B cell (primary cell): ENCODE measurements at regions of chr19 and their contacts with region 1.

Region 1: GRCh38 chr19:12139885-12140547 is at the start of gene ZNF20:
- DNase-seq: peak; percentile 91
- ATAC-seq: peak; percentile 96
- H3K4me3 ChIP-seq: peak within 1 kb of the TSS; percentile 73 to 93 (median 83)
- H3K4me3 Mint-ChIP-seq: peak within 1 kb of the TSS; percentile 84
- H3K27ac ChIP-seq: peak within 1 kb of the TSS; percentile 31 to 62
- H3K27ac Mint-ChIP-seq: peak within 1 kb of the TSS; percentile 86
- H3K4me1 ChIP-seq: peaks cover 15 to 23% of the 10 kb centered on the region in 2 donors
- H3K4me1 Mint-ChIP-seq: peaks cover 34% of the 10 kb centered on the region
- H3K27me3 ChIP-seq: no peaks in the 10 kb centered on the region
- H3K27me3 Mint-ChIP-seq: no peaks in the 10 kb centered on the region
- CTCF ChIP-seq: no peak
- total RNA-seq, gene ZNF20: 5.4 and 10.6 TPM in 2 replicates

Region 2: DNA sequence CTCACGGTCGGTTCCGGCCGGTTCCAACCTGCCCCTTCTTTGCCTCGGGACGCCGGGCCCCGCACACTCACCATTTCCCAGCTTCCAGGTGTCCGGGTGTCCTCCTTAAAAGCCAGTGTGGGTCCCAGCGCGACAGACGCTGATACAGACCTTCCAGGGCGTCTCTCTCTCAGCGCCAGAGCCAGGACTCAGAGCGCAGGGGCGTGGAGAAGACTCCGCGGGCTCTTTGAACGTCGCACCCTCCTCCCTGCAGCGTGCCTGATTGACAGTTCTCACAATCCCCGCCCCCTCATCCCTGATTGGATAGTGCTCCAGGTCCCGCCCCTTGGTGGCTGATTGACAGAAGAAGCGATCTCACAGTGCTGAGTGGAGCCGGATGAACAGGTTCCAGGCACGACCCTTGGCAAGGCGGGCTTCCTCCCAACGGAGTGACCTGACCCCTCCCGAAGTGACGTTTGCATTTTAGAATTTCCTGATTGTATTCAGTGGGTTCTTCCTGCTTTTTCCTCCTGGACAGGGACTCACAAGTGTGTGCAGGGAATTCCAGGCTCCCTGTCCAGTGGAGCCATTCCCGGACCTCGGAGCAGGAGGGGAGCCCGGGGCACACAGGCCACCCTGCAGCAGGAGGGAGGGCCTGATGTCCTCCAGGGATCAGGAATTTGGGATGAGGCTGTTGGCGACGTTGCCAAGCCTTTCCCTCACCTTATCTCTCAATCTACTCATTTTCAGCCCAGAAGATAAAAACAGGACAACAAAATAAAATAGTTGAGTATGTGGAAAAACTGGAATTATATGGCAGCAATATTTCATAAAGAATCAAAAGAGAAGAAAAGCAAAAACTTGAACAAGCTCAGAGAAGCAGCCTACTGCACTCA is 401.0 kb before region 1 on chr19 and contains the start of gene ZNF823:
- CTCF ChIA-PET with region 1: no interaction called
- POLR2A ChIA-PET with region 1: no interaction called
- intact Hi-C with region 1: loop called (anchors 1 kb)
- DNase-seq: peak; percentile 94
- ATAC-seq: peak; percentile 99
- H3K4me3 ChIP-seq: peak within 1 kb of the TSS; percentile 36 to 92 (median 83)
- H3K4me3 Mint-ChIP-seq: peak within 1 kb of the TSS; percentile 99
- H3K27ac ChIP-seq: peak within 1 kb of the TSS in 1 of 2 donors; percentile 38
- H3K27ac Mint-ChIP-seq: peak within 1 kb of the TSS; percentile 89
- H3K4me1 ChIP-seq: peaks cover 15 to 19% of the 10 kb centered on the region in 2 donors
- H3K4me1 Mint-ChIP-seq: peaks cover 26% of the 10 kb centered on the region
- H3K27me3 ChIP-seq: no peaks in the 10 kb centered on the region
- H3K27me3 Mint-ChIP-seq: peaks cover 5% of the 10 kb centered on the region
- CTCF ChIP-seq: no peak
- total RNA-seq, gene ZNF823: 4.2 and 5.1 TPM in 2 replicates

Region 3: DNA sequence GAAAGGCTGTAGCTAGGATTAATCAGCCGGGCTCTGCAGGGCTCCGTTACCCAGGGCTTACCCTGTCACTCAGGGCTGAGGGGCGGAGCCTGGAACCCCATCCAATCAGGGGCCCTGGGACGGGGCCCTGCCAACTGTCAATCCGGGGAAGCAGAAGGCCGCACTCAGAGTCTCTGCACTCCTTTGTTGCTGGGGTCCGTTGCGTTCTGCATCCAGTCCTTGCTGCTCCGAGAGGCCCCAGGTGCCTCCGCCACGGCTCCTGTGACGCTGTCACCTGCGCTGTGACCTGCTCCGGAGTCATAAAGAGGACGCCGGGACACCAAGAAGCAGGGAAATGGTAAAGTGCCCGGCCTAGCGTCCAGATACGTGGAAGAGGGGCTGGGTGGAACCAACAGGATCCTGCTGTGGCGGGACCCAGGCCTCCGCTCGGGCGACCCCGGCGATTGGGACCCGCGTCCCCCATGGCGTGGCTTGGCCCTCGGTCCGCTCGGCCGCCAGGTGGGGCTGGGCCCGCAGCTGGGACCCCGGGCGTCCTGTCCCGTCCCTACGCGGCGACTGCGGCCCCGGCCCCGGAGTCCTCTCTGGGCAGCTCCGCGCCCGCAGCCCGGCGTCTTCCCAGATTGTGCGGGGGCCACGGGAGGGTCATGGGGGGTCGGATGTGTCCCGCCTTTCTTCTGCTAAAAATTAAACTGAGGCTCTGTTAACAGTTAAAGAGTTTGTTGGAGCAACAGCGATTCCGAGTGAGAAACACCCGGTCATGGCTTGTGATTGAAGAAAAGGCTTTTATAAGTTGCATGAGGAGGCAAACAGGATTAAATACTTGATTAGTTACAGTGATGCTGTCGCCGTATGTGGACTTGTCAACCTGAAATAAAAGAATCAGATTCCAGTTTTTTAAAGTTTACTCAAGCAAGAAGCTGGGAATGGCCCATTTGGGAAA is 341.4 kb before region 1 on chr19 and contains the start of gene ZNF491:
- CTCF ChIA-PET with region 1: interaction called, 26 read pairs
- POLR2A ChIA-PET with region 1: interaction called, 5 read pairs
- intact Hi-C with region 1: loop called (anchors 1 kb)
- DNase-seq: peak; percentile 87
- ATAC-seq: peak; percentile 98
- H3K4me3 ChIP-seq: peak within 1 kb of the TSS; percentile 53 to 76 (median 61)
- H3K4me3 Mint-ChIP-seq: peak within 1 kb of the TSS; percentile 93
- H3K27ac ChIP-seq: peak within 1 kb of the TSS; percentile 2 to 52
- H3K27ac Mint-ChIP-seq: peak within 1 kb of the TSS; percentile 74
- H3K4me1 ChIP-seq: peaks cover 14 to 17% of the 10 kb centered on the region in 2 donors
- H3K4me1 Mint-ChIP-seq: peaks cover 21% of the 10 kb centered on the region
- H3K27me3 ChIP-seq: no peaks in the 10 kb centered on the region
- H3K27me3 Mint-ChIP-seq: no peaks in the 10 kb centered on the region
- CTCF ChIP-seq: no peak
- total RNA-seq, gene ZNF491: 1.7 and 2.4 TPM in 2 replicates

Region 4: GRCh38 chr19:11881151-11881800 is 258.7 kb before region 1 on chr19:
- CTCF ChIA-PET with region 1: interaction called, 22 read pairs
- POLR2A ChIA-PET with region 1: no interaction called
- intact Hi-C with region 1: loop called (anchors 1 kb)
- DNase-seq: peak; percentile 78
- ATAC-seq: peak; percentile 56
- H3K4me3 ChIP-seq: no peak overlapping the region
- H3K4me3 Mint-ChIP-seq: no peak overlapping the region
- H3K27ac ChIP-seq: no peak overlapping the region
- H3K27ac Mint-ChIP-seq: no peak overlapping the region
- H3K4me1 ChIP-seq: peaks cover 0 to 6% of the 10 kb centered on the region in 2 donors
- H3K4me1 Mint-ChIP-seq: peaks cover 4% of the 10 kb centered on the region
- H3K27me3 ChIP-seq: no peaks in the 10 kb centered on the region
- H3K27me3 Mint-ChIP-seq: no peaks in the 10 kb centered on the region
- CTCF ChIP-seq: peak; percentile 77

Region 5: DNA sequence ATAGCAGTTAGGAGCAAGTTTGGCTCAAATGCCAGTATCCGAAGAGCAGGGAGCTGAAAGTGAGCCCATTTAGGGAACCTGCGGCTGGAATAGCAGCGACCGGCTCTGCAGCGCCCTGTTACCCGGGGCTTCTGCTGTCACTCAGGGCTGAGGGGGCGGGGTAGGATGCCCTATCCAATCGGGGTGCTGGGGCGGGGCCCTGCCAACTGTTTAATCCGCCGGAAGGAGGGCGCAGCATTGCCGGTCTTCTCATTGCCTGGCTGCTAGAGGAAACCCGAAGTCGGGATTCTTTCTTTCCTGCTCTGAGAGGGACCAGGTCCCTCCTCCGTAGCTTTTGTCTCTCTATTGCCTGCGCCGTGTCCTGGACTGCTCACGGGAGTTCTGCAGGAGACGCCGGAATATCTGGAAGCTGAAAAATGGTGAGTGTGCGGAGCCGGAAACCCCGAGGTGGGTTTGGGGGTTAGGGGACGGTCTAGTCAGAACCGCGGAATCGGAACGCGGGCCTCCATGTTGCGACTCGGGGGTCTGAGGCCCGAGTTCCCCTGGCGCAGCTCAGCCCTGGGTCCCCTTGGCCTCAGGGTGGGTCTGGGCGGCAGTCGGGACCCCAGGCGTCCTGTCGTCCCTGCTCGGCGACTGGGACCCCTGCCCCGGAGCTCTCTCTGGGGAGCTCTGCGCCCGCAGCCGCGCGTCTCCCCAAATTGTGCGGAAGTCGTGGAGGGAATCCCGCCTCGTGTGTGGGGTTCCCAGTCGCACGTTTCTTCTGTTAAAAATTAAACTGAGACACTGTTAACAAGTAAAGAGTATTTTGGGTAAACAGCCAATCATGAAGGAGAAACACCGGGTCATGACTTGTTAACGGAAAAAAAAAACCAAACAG is 152.4 kb before region 1 on chr19:
- CTCF ChIA-PET with region 1: interaction called, 20 read pairs
- POLR2A ChIA-PET with region 1: no interaction called
- intact Hi-C with region 1: loop called (anchors 1 kb)
- DNase-seq: peak; percentile 93
- ATAC-seq: peak; percentile 93
- H3K4me3 ChIP-seq: peak overlapping the region; percentile 86 to 98 (median 97)
- H3K4me3 Mint-ChIP-seq: peak overlapping the region; percentile 96
- H3K27ac ChIP-seq: peak overlapping the region; percentile 85 to 92
- H3K27ac Mint-ChIP-seq: peak overlapping the region; percentile 89
- H3K4me1 ChIP-seq: peaks cover 0 to 5% of the 10 kb centered on the region in 2 donors
- H3K4me1 Mint-ChIP-seq: peaks cover 24% of the 10 kb centered on the region
- H3K27me3 ChIP-seq: no peaks in the 10 kb centered on the region
- H3K27me3 Mint-ChIP-seq: no peaks in the 10 kb centered on the region
- CTCF ChIP-seq: no peak

Region 6: GRCh38 chr19:12092065-12092867 is 47.8 kb before region 1 on chr19:
- CTCF ChIA-PET with region 1: interaction called, 17 read pairs
- POLR2A ChIA-PET with region 1: no interaction called
- intact Hi-C with region 1: loop called (anchors 2 kb)
- DNase-seq: peak; percentile 63
- ATAC-seq: peak; percentile 63
- H3K4me3 ChIP-seq: peak overlapping the region; percentile 38 to 76 (median 57)
- H3K4me3 Mint-ChIP-seq: peak overlapping the region; percentile 86
- H3K27ac ChIP-seq: peak overlapping the region in 1 of 2 donors; percentile 20
- H3K27ac Mint-ChIP-seq: peak overlapping the region; percentile 20
- H3K4me1 ChIP-seq: peaks cover 6 to 14% of the 10 kb centered on the region in 2 donors
- H3K4me1 Mint-ChIP-seq: peaks cover 12% of the 10 kb centered on the region
- H3K27me3 ChIP-seq: no peaks in the 10 kb centered on the region
- H3K27me3 Mint-ChIP-seq: peaks cover 3% of the 10 kb centered on the region
- CTCF ChIP-seq: no peak